Activated CD4-positive, alpha-beta T cell treated with anti-CD3 and anti-CD28 coated beads for 36 hours (primary cell): ENCODE measurements at regions of chr3 and their contacts with region 1.

Region 1: GRCh38 chr3:15051531-15051930 is 13.6 kb downstream of the MRPS25 start:
- DNase-seq: peak; percentile 67
- ATAC-seq: peak; percentile 81
- H3K4me3 Mint-ChIP-seq: no peak overlapping the region
- H3K27ac Mint-ChIP-seq: peak overlapping the region; percentile 9
- H3K4me1 Mint-ChIP-seq: peaks cover 30% of the 10 kb centered on the region
- H3K27me3 Mint-ChIP-seq: no peaks in the 10 kb centered on the region

Region 2: GRCh38 chr3:15064835-15065549 is 13.5 kb after region 1 on chr3 and contains the start of gene MRPS25:
- CTCF ChIA-PET with region 1: interaction called, 13 read pairs
- POLR2A ChIA-PET with region 1: no interaction called
- intact Hi-C with region 1: loop called in 1 of 2 experiments (anchors 1 kb)
- DNase-seq: peak; percentile 95
- ATAC-seq: peak; percentile 98
- H3K4me3 Mint-ChIP-seq: peak within 1 kb of the TSS; percentile 96
- H3K27ac Mint-ChIP-seq: peak within 1 kb of the TSS; percentile 96
- H3K4me1 Mint-ChIP-seq: peaks cover 22% of the 10 kb centered on the region
- H3K27me3 Mint-ChIP-seq: no peaks in the 10 kb centered on the region
- total RNA-seq, gene MRPS25: 52.3 to 67.0 TPM